Body of pancreas (tissue), 4 donors: ENCODE measurements at regions of chr3 and their contacts with region 1.

Region 1: DNA sequence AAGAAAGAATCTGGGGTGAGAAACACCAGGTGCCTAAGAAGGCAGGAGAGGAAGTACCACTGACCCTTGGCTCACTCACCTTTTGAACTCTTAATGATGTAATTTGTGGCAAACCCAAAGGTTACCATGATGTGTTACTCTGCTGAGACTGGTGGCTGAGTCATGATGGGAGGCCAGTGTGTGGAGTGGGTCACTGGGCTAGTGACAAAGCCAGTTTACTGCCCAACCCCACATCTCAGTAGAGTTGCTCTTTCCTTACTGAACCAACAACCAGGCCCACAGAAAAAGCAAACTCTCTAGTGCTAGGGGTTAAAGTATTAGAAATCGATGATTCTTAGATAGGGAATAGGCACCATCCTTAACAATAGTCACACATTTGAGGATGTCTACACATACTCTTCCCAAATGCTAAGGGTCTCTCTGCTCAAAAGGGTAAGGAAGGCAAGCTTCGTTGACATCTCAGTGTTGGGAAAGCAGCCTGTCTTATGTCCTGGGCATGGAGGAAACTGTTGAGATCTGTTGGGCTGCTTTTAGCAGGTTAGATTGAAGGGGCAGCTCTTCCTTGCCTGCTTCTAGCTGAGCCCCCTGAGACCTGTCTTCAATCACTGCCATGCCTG is 3.1 kb downstream of the RBP2 start:
- DNase-seq: no peak
- ATAC-seq: no peak
- H3K4me3 ChIP-seq: no peak overlapping the region
- H3K27ac ChIP-seq: no peak overlapping the region
- H3K4me1 ChIP-seq: peaks cover 21% of the 10 kb centered on the region
- H3K27me3 ChIP-seq: no peaks in the 10 kb centered on the region
- CTCF ChIP-seq: no peak
- POLR2A ChIP-seq: no peak

Region 2: DNA sequence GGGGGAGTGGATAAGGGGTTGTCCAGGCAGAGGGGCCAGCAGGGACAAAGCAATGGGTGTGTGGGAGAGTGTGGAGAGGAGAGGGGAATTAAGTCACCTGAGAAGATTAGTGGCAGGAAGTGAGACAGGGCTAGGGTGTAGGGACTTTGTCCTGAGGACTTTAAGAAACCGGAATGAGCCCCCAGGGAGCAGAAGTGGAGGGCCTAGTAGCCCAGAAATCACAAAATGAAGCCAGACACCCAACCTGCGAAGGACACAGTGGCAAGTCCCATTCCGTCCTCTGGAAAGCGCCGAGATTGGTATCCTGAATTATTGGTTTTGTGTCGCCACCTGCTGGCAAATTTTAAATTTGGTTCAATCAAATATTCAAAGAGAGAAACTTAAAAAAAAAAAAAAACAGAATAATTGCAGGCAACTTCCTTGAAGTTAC is 1390.3 kb after region 1 on chr3:
- intact Hi-C with region 1: loop called (anchors 5 kb)
- DNase-seq: peak; percentile 72 to 77 (median 73)
- ATAC-seq: peak; percentile 71
- H3K4me3 ChIP-seq: no peak overlapping the region
- H3K27ac ChIP-seq: no peak overlapping the region
- H3K4me1 ChIP-seq: no peaks in the 10 kb centered on the region
- H3K27me3 ChIP-seq: no peaks in the 10 kb centered on the region
- CTCF ChIP-seq: peak; percentile 25 to 71 (median 59)
- POLR2A ChIP-seq: no peak